ENCODE measurements at regions of chr5 and their contacts with region 1.

Region 1: GRCh38 chr5:146919304-146919703 is 40.7 kb upstream of the PPP2R2B start:
- DNase-seq: peak in 1 of 2 donors; percentile 8
- ATAC-seq: peak; percentile 75 to 88 (median 88)
- H3K4me3 ChIP-seq: no peak overlapping the region
- H3K4me3 Mint-ChIP-seq: no peak overlapping the region
- H3K27ac ChIP-seq: no peak overlapping the region
- H3K27ac Mint-ChIP-seq: peak overlapping the region in 1 of 2 donors; percentile 58
- H3K4me1 ChIP-seq: no peaks in the 10 kb centered on the region
- H3K4me1 Mint-ChIP-seq: peaks cover 29 to 33% of the 10 kb centered on the region in 2 donors
- H3K27me3 ChIP-seq: no peaks in the 10 kb centered on the region
- H3K27me3 Mint-ChIP-seq: peaks cover 0 to 7% of the 10 kb centered on the region in 2 donors
- CTCF ChIP-seq: no peak

Region 2: DNA sequence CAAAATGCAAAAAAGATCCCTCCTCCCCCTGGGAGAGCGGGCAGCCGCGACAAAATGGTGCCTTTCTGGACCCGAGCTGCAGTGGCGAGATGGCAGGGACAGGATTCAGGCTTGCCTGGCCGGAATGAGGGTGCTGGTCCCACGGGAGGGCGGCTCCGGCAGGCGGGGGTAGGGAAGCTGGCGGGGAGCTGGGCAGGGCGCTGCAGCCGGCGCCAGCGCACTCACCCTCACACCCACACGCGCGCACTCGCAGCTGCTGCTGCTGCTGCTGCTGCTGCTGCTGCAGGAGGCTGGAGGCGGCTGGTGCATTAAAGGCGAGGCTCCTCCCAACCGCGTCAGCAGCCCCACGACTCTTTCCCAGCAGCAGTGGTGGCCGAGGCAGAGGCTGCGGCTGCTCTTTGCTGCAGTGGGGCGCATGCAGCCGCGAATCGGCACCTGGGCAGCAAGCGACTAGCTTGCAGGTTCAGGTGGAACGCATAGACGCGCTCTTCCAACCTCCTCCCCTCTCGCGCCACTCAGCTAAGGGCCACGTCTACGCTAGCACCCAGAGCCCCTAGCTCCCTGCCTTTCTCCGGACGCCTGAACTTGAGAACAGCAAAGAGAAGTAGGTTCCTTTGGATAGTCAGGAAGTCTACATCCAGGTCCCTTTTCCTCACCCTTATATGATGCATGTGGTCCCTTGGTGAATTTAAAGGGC is 40.7 kb before region 1 on chr5 and contains the start of gene PPP2R2B:
- intact Hi-C with region 1: loop called (anchors 5 kb)
- DNase-seq: peak in 1 of 2 donors; percentile 70
- ATAC-seq: peak; percentile 75 to 80 (median 76)
- H3K4me3 ChIP-seq: peak within 1 kb of the TSS; percentile 62
- H3K4me3 Mint-ChIP-seq: peak within 1 kb of the TSS; percentile 96
- H3K27ac ChIP-seq: peak within 1 kb of the TSS; percentile 52
- H3K27ac Mint-ChIP-seq: peak within 1 kb of the TSS; percentile 27 to 73
- H3K4me1 ChIP-seq: peaks cover 10% of the 10 kb centered on the region
- H3K4me1 Mint-ChIP-seq: peaks cover 37 to 43% of the 10 kb centered on the region in 2 donors
- H3K27me3 ChIP-seq: no peaks in the 10 kb centered on the region
- H3K27me3 Mint-ChIP-seq: peaks cover 0 to 4% of the 10 kb centered on the region in 2 donors
- CTCF ChIP-seq: no peak
- total RNA-seq, gene PPP2R2B: 44.9 to 68.3 (median 63.7) TPM

Region 3: DNA sequence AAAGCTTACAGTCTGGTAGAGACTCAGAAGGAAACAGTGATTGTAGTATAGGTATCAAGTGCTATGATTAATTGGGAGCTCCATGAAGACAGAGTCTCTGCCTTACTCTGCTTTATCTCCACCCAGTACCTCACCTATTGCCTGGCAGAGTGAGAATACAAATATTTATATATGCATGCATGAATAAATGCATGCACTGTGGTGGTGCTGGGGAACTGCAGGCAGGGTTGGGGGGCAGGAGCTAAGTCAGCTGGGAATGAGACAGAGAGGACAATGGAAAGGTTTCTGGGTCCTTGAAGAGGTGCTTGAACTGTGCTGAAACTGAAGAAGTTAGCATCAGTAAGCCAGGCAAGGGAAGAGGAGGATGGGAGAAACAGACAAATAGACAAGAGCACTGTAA is 40.1 kb after region 1 on chr5:
- intact Hi-C with region 1: no loop called
- DNase-seq: no peak
- ATAC-seq: no peak
- H3K4me3 ChIP-seq: no peak overlapping the region
- H3K4me3 Mint-ChIP-seq: no peak overlapping the region
- H3K27ac ChIP-seq: no peak overlapping the region
- H3K27ac Mint-ChIP-seq: no peak overlapping the region
- H3K4me1 ChIP-seq: no peaks in the 10 kb centered on the region
- H3K4me1 Mint-ChIP-seq: no peaks in the 10 kb centered on the region
- H3K27me3 ChIP-seq: no peaks in the 10 kb centered on the region
- H3K27me3 Mint-ChIP-seq: peaks cover 13 to 33% of the 10 kb centered on the region in 2 donors
- CTCF ChIP-seq: no peak

Measured in natural killer cell (primary cell).